K562 (cell line): ENCODE measurements at regions of chr9 and their contacts with region 1.

Region 1: DNA sequence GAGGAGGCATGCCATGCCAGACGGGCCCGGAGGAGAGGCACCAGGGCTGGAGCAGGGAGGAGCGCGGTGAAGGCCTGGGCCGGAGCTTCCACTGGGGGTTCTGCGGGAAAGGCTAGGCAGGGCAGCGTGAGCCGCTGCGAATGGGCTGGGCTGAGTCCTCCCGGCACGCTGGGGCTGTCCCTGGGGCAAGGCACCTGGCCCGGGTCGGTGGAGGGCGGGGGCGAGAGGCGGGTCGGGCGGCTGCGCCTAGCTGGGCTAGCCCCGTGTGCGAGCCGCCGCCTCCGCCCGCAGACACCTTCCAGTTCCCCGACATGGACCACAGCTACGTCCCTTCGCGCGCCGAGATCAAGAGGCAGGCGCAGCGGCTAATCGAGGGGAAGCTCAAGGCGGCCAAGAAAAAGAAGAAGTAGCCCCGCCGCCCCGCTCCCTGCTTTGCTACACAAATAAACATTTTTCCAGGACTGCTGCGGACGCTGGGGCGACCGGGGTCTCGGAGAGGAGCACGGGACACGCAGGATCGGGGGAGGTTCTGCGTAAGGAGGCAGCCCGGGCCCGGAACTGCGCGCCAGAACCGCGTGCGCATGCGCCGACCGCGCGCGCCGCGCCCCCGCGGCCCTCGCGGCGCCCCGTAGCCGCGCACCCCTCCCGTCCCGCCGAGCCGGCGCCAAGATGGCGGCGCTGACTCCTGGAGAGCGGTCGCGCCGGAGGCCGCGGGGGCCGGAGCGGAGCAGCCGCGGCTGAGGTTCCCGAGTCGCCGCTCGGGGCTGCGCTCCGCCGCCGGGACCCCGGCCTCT is at the start of gene RABL6:
- DNase-seq: peak; percentile 88 to 95 (median 92)
- ATAC-seq: peak; percentile 72
- H3K4me3 ChIP-seq: peak within 1 kb of the TSS; percentile 97
- H3K27ac ChIP-seq: peak within 1 kb of the TSS; percentile 91
- H3K4me1 ChIP-seq: peaks cover 26 to 56% of the 10 kb centered on the region in 2 experiments
- H3K27me3 ChIP-seq: no peaks in the 10 kb centered on the region
- CTCF ChIP-seq: no peak
- EP300 ChIP-seq: no peak; the same call in 1 of the 2 replicates
- POLR2A ChIP-seq: peak; percentile 81
- RAD21 ChIP-seq: no peak
- polyA plus RNA-seq, gene RABL6: 5.6 to 6.4 TPM

Region 2: GRCh38 chr9:136385015-136385414 is 422.5 kb before region 1 on chr9:
- CTCF ChIA-PET with region 1: no interaction called
- POLR2A ChIA-PET with region 1: no interaction called
- in situ Hi-C with region 1: no loop called
- intact Hi-C with region 1: no loop called
- DNase-seq: no peak
- ATAC-seq: no peak
- H3K4me3 ChIP-seq: no peak overlapping the region
- H3K27ac ChIP-seq: no peak overlapping the region
- H3K4me1 ChIP-seq: peaks cover 0 to 12% of the 10 kb centered on the region in 2 experiments; a peak in 1 of 5 replicates
- H3K27me3 ChIP-seq: no peaks in the 10 kb centered on the region
- CTCF ChIP-seq: no peak
- EP300 ChIP-seq: no peak
- POLR2A ChIP-seq: no peak
- RAD21 ChIP-seq: no peak

Region 3: GRCh38 chr9:136820971-136821825 is 13.7 kb after region 1 on chr9:
- CTCF ChIA-PET with region 1: no interaction called
- POLR2A ChIA-PET with region 1: interaction called, 16 read pairs
- in situ Hi-C with region 1: no loop called
- intact Hi-C with region 1: no loop called
- DNase-seq: peak in 2 of 4 experiments; percentile 53 to 56
- ATAC-seq: no peak
- H3K4me3 ChIP-seq: no peak overlapping the region
- H3K27ac ChIP-seq: no peak overlapping the region
- H3K4me1 ChIP-seq: peaks cover 0 to 25% of the 10 kb centered on the region in 2 experiments; a peak in 2 of 5 replicates
- H3K27me3 ChIP-seq: no peaks in the 10 kb centered on the region
- CTCF ChIP-seq: no peak
- EP300 ChIP-seq: no peak
- POLR2A ChIP-seq: no peak
- RAD21 ChIP-seq: no peak